ENCODE measurements at regions of chrX and their contacts with region 1.

Region 1: GRCh38 chrX:7316887-7317286 is 168.9 kb upstream of the PUDP start:
- DNase-seq: no peak
- ATAC-seq: no peak
- H3K4me3 ChIP-seq: no peak overlapping the region
- H3K27ac ChIP-seq: no peak overlapping the region
- H3K4me1 ChIP-seq: no peaks in the 10 kb centered on the region
- H3K27me3 ChIP-seq: no peaks in the 10 kb centered on the region
- CTCF ChIP-seq: no peak

Region 2: GRCh38 chrX:7372843-7373525 is 56.1 kb after region 1 on chrX:
- intact Hi-C with region 1: loop called in 1 of 10 experiments (anchors 10 kb)
- DNase-seq: no peak
- ATAC-seq: no peak
- H3K4me3 ChIP-seq: no peak overlapping the region
- H3K27ac ChIP-seq: no peak overlapping the region
- H3K4me1 ChIP-seq: no peaks in the 10 kb centered on the region
- H3K27me3 ChIP-seq: no peaks in the 10 kb centered on the region
- CTCF ChIP-seq: no peak